Mammary epithelial cell (primary cell): ENCODE measurements at regions of chr19 and their contacts with region 1.

Region 1: DNA sequence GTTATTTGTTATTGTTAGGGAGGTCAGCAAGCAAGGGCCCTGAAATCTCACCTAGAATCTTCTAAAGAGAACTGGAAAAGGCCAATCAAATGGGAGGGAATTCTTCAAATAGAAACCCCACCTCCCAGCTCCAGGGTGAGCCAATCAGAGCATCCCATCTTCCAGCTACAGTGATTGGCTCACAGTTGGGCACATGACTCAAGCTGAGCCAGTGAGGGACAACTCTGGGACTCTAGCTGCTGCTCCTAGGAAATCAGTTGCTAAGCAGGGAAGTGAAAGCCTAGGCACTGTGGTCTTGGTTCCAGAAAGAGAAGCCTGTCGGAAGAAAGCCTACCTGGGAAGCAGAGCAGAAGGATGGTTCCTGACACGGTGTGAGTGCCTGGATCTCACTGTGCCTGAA is 13.4 kb downstream of the TM6SF2 start:
- DNase-seq: peak; percentile 37
- H3K4me3 ChIP-seq: no peak overlapping the region
- H3K27ac ChIP-seq: no peak overlapping the region
- H3K4me1 ChIP-seq: no peaks in the 10 kb centered on the region
- H3K27me3 ChIP-seq: peaks cover 22% of the 10 kb centered on the region
- CTCF ChIP-seq: no peak

Region 2: GRCh38 chr19:19214892-19215291 is 44.8 kb before region 1 on chr19:
- CTCF ChIA-PET with region 1: no interaction called
- dilution Hi-C with region 1: loop called (anchors 5 kb)
- in situ Hi-C with region 1: no loop called
- intact Hi-C with region 1: no loop called
- DNase-seq: no peak
- H3K4me3 ChIP-seq: no peak overlapping the region
- H3K27ac ChIP-seq: no peak overlapping the region
- H3K4me1 ChIP-seq: no peaks in the 10 kb centered on the region
- H3K27me3 ChIP-seq: peaks cover 2% of the 10 kb centered on the region
- CTCF ChIP-seq: no peak

Region 3: GRCh38 chr19:19297759-19298158 is 38.0 kb after region 1 on chr19:
- CTCF ChIA-PET with region 1: no interaction called
- dilution Hi-C with region 1: loop called (anchors 5 kb)
- in situ Hi-C with region 1: no loop called
- intact Hi-C with region 1: no loop called
- DNase-seq: no peak
- H3K4me3 ChIP-seq: no peak overlapping the region
- H3K27ac ChIP-seq: no peak overlapping the region
- H3K4me1 ChIP-seq: no peaks in the 10 kb centered on the region
- H3K27me3 ChIP-seq: no peaks in the 10 kb centered on the region
- CTCF ChIP-seq: no peak

Region 4: DNA sequence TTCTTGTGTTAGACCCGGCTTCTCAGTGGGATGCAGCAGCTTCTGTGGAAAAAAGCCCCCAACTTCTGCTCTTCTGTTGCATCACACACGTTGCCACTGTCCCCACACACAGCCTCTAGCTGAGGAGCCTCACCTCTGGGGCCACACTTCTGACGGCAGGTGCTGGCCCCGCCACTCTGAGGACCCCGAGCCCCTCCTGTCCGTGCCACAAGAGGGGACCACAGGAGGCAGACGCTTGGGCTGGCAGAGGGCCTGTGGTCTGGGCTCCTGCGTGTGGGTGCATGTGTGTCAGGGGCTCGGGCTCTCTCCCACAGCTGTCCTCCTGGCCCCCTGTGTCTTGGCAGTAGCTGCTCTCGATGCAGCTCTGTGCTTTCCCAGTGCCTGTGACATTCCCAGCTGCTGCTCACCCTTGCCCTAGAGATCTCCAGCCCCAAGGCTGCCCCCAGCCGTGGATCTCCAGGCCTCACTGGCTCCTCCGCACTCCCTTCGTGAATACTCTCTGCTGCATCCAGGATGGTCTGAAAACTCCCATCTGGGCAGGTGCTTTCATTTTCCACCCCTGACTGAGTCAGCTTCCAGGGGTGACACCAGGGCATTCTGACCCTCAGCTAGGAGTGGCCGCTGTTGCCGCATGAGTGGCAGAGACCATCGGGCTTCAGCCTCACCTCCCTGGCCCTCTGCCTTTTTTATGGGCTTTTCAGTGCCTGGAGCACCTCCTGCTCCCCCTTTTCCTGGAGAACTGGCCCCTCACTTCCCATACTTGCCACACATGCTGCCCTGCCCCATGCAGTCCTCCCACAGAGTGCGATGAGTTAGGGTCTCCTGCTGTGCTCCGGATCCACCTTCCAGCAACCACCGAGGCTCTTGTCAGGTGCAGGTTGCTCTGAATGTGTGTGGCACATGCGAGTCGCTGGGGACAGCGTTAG is 74.6 kb after region 1 on chr19:
- CTCF ChIA-PET with region 1: no interaction called
- dilution Hi-C with region 1: loop called (anchors 5 kb)
- in situ Hi-C with region 1: no loop called
- intact Hi-C with region 1: no loop called
- DNase-seq: no peak
- H3K4me3 ChIP-seq: no peak overlapping the region
- H3K27ac ChIP-seq: no peak overlapping the region
- H3K4me1 ChIP-seq: peaks cover 48% of the 10 kb centered on the region
- H3K27me3 ChIP-seq: no peaks in the 10 kb centered on the region
- CTCF ChIP-seq: no peak